ENCODE measurements at regions of chr19 and their contacts with region 1.

Region 1: DNA sequence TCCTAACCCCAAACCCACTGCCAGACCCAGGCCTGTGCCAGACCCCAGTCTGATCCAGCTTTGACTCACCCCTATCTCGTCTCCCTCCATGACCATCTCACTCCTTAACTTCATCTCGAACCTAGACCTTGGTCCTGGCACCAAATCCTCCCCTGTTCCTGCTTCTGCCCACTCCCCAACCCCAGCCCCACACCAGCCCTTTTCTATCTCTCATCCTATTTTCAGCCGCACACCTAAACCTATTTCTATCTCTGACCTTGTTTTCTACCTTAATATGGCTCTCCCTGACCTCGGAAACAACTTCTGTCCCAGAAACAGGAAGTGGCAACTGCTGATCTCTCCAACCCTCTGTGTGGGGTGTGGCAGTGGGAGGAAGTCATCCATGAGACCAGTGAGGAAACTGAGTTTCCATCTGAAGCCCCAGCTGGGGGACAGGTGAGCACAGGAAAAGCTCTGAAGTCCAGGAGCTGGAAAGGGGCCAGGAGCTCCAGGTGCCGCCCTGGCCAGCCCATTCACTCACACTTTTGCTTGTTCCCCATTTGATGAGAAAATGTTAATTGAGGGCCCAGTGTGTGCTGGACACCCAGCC is 13.7 kb downstream of the PTH2 start:
- DNase-seq: peak; percentile 72
- ATAC-seq: peak; percentile 84
- H3K4me3 Mint-ChIP-seq: peak overlapping the region; percentile 51
- H3K27ac Mint-ChIP-seq: peak overlapping the region; percentile 85
- H3K4me1 Mint-ChIP-seq: peaks cover 41% of the 10 kb centered on the region
- H3K27me3 Mint-ChIP-seq: no peaks in the 10 kb centered on the region

Region 2: DNA sequence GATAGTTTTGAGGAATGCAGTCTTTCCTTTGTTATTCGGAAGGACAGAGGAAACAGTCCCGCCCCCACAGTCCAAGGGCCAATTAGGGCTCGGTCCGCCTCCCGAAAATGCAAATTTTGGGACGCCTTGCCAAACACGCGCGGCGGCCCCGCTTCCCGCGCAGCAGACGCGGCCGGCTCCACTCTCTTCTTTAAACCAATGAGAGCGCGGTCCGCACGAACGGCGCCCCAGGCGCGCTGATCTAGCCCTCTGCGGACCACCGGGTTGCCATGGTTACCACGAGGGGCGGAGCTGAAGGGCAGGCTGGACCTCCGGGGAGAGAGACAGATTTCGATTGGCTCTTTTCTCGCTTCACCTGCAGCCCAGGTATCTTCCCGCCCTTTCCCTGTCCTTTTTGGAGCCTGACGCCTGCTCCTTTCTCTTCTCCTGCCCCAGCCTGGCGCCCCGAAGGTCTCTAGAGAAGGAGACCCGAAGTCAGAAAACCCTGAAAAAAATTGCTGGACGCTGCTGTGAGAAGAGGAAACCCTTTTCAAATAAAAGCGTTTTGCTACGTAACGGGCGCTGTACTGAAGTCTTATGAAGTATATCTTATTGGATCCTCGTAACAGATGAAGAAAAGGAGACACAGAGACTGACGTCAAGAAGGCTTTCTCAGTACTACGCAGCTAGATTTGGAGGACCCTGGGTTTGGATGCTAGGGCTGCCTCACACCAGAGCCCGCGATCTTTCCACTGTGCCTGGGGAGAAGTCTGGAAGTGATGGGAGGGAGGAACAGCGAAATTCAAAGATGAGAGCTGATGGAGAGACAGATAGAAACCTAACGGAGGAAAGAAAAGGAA is 11.7 kb after region 1 on chr19:
- CTCF ChIA-PET with region 1: interaction called, 11 read pairs
- DNase-seq: peak; percentile 56
- ATAC-seq: peak; percentile 37
- H3K4me3 Mint-ChIP-seq: peak overlapping the region; percentile 2
- H3K27ac Mint-ChIP-seq: no peak overlapping the region
- H3K4me1 Mint-ChIP-seq: peaks cover 24% of the 10 kb centered on the region
- H3K27me3 Mint-ChIP-seq: peaks cover 89% of the 10 kb centered on the region

Measured in activated CD8-positive, alpha-beta memory T cell treated with anti-CD3 and anti-CD28 coated beads, Interleukin-2, amount 10 ng/mL, durations not matched to agents 7 days and 5 days (primary cell).